ENCODE measurements at regions of chr22 and their contacts with region 1.

Region 1: DNA sequence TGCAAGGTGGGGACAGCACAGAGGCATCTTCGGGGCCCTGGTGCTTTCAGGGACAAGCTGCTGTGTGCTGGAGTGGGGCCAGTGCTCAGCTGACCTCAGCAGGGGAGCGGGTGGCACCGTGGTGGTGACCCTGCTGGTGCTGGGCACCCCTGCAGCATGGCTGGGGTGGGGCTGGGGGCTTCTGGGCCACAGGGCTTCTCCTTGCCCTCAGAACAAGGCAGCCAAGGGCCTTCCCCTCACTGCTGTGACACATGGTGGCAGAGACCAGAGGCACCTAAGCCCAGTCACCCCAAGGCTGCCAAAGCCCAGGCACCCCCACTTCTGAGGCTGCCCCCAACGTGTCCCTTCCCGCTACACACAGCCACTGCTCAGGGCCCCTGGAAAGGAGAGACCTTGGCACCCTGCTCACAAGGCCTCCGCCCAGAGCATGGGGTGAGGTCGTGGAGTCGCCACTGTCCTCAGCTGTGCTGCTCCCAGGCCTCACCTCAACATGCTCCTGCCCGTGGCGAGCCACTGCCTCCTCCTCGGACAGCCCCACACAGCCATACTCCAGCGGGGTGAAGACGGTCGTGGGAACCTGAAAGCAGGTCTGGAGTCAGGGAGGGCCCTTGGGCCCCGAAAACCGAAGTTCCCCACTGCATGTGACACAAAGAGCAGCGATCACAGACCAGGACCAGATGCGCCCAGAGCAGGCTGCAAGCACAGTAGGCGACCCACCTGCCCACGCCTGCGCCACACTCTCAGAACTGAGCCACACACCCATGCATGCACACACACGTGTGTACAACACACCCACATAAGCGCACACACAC is 25.2 kb upstream of the GNB1L start:
- DNase-seq: no peak
- H3K4me3 ChIP-seq: no peak overlapping the region
- H3K27ac ChIP-seq: no peak overlapping the region
- H3K4me1 ChIP-seq: peaks cover 44% of the 10 kb centered on the region
- H3K27me3 ChIP-seq: no peaks in the 10 kb centered on the region
- CTCF ChIP-seq: no peak

Region 2: GRCh38 chr22:19806213-19807145 is 73.4 kb before region 1 on chr22:
- CTCF ChIA-PET with region 1: no interaction called
- dilution Hi-C with region 1: no loop called
- in situ Hi-C with region 1: no loop called
- intact Hi-C with region 1: loop called (anchors 5 kb)
- DNase-seq: peak; percentile 86
- H3K4me3 ChIP-seq: no peak overlapping the region
- H3K27ac ChIP-seq: no peak overlapping the region
- H3K4me1 ChIP-seq: peaks cover 31% of the 10 kb centered on the region
- H3K27me3 ChIP-seq: no peaks in the 10 kb centered on the region
- CTCF ChIP-seq: no peak

Region 3: DNA sequence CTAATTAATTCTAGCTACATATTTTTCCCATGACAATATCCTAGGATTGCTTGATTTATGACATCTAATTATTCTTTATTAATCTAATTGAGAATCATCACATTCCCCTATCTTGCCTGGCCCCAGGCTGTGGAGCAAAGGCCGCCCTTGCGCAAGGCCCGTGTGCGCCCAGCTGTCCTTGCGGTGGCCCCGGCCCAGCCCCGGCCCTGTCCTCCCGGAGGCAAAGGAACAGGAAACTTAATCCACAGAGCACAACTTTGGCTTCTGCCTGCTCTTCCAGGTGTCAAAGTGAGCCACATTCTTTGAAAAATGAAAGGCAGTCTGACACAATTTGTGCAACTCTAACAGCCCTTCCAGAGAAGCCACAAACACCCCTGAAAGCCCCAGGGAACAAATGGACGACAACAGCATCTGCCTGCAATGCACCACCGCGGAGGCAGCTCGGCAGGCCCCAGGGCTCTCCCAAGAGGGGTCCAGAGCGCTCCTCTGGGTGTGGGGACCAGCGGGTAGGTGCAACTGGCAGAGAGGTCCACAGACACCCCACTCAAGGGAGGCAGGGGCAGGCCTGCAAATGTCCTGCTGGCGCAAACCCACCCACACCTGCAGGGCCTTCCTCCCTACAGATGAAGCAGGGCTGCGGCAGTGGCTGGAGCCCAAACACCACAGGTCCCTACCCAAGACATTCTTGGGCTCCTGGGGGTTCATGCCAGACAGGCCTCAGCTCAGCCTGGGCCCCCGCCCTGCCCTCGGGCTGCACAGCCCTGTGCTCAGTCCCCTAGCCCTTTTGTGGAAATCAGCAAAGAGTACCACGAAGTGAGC is 55.5 kb before region 1 on chr22:
- CTCF ChIA-PET with region 1: no interaction called
- dilution Hi-C with region 1: no loop called
- in situ Hi-C with region 1: no loop called
- intact Hi-C with region 1: no loop called
- DNase-seq: no peak
- H3K4me3 ChIP-seq: no peak overlapping the region
- H3K27ac ChIP-seq: peak overlapping the region; percentile 41
- H3K4me1 ChIP-seq: peaks cover 22% of the 10 kb centered on the region
- H3K27me3 ChIP-seq: no peaks in the 10 kb centered on the region
- CTCF ChIP-seq: no peak